PC-3 (cell line): ENCODE measurements at regions of chr5 and their contacts with region 1.

Region 1: GRCh38 chr5:140725799-140726471 is 25.7 kb downstream of the ZMAT2 start:
- DNase-seq: no peak
- ATAC-seq: no peak
- H3K4me3 ChIP-seq: no peak overlapping the region
- H3K27ac ChIP-seq: no peak overlapping the region
- H3K4me1 ChIP-seq: no peaks in the 10 kb centered on the region
- H3K27me3 ChIP-seq: no peaks in the 10 kb centered on the region
- CTCF ChIP-seq: no peak

Region 2: DNA sequence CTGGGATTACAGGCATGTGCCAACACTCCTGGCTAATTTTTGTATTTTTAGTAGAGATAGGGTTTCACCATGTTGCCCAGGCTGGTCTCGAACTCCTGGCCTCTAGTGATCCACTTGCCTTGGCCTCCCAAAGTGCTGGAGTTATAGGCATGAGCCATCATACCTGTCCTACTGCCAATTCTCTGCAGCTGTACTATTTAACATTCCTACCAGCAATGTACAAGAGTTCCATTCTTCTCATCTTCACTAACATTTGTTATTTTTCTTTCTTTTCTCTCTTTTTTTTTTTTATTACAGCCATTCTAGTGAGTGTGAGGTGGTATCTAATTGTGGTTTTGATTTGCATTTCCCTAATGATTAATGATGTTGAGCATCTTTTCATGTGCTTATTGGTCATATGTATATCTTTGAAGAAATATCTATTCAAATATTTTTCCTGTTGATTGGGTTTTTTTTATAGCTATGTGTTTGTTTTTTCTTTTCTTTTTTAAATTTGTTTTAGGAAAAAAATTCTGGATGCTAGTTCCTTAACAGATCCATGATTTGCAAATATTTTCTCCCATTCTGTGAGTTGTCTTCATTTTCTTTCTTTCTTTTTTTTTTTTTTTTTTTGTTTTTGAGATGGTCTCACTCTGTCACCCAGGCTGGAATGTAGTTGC is 306.9 kb before region 1 on chr5:
- CTCF ChIA-PET with region 1: no interaction called
- POLR2A ChIA-PET with region 1: interaction called, 21 read pairs
- intact Hi-C with region 1: no loop called
- DNase-seq: no peak
- ATAC-seq: no peak
- H3K4me3 ChIP-seq: no peak overlapping the region
- H3K27ac ChIP-seq: no peak overlapping the region
- H3K4me1 ChIP-seq: no peaks in the 10 kb centered on the region
- H3K27me3 ChIP-seq: no peaks in the 10 kb centered on the region
- CTCF ChIP-seq: no peak

Region 3: DNA sequence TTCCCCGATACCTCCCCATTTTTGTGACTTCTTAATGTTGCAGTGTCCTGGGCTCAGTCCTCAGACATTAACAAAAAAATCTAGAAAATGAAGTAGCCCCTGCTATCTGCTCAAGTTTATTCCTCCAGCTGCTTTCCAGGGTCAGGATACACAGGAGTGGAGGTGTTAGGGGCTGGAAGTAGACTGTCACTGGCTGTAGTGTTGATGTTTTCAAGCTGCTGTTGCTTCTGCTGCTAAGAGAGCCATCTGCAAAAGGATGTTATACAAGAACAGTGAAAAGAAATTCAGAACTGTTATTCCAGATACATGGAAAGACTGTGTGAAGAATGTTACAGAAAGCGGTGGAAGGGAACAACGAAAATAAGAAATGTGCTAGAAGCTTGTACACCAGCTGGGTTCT is 103.6 kb before region 1 on chr5:
- CTCF ChIA-PET with region 1: no interaction called
- POLR2A ChIA-PET with region 1: no interaction called
- intact Hi-C with region 1: no loop called
- DNase-seq: no peak
- ATAC-seq: no peak
- H3K4me3 ChIP-seq: no peak overlapping the region
- H3K27ac ChIP-seq: no peak overlapping the region
- H3K4me1 ChIP-seq: no peaks in the 10 kb centered on the region
- H3K27me3 ChIP-seq: 0 out of 2 replicates have a peak, but pooled peaks cover 2% of the 10 kb centered on the region
- CTCF ChIP-seq: no peak

Region 4: GRCh38 chr5:140764177-140765020 is 38.5 kb after region 1 on chr5:
- CTCF ChIA-PET with region 1: no interaction called
- POLR2A ChIA-PET with region 1: no interaction called
- intact Hi-C with region 1: no loop called
- DNase-seq: no peak
- ATAC-seq: no peak
- H3K4me3 ChIP-seq: no peak overlapping the region
- H3K27ac ChIP-seq: no peak overlapping the region
- H3K4me1 ChIP-seq: no peaks in the 10 kb centered on the region
- H3K27me3 ChIP-seq: no peaks in the 10 kb centered on the region
- CTCF ChIP-seq: no peak